Activated CD4-positive, alpha-beta memory T cell treated with anti-CD3 and anti-CD28 coated beads, Interleukin-2, amount 10 ng/mL, durations not matched to agents 7 days and 5 days (primary cell): ENCODE measurements at regions of chr20 and their contacts with region 1.

Region 1: GRCh38 chr20:50110141-50110925 is 2.6 kb downstream of the UBE2V1 start:
- DNase-seq: peak; percentile 74
- H3K4me3 Mint-ChIP-seq: peak overlapping the region; percentile 91
- H3K27ac Mint-ChIP-seq: peak overlapping the region; percentile 95
- H3K4me1 Mint-ChIP-seq: peaks cover 83% of the 10 kb centered on the region
- H3K27me3 Mint-ChIP-seq: no peaks in the 10 kb centered on the region

Region 2: GRCh38 chr20:50085452-50086365 is 24.6 kb before region 1 on chr20:
- CTCF ChIA-PET with region 1: interaction called, 12 read pairs
- POLR2A ChIA-PET with region 1: interaction called, 4 read pairs
- DNase-seq: peak; percentile 38
- H3K4me3 Mint-ChIP-seq: peak overlapping the region; percentile 41
- H3K27ac Mint-ChIP-seq: peak overlapping the region; percentile 67
- H3K4me1 Mint-ChIP-seq: peaks cover 17% of the 10 kb centered on the region
- H3K27me3 Mint-ChIP-seq: no peaks in the 10 kb centered on the region

Region 3: DNA sequence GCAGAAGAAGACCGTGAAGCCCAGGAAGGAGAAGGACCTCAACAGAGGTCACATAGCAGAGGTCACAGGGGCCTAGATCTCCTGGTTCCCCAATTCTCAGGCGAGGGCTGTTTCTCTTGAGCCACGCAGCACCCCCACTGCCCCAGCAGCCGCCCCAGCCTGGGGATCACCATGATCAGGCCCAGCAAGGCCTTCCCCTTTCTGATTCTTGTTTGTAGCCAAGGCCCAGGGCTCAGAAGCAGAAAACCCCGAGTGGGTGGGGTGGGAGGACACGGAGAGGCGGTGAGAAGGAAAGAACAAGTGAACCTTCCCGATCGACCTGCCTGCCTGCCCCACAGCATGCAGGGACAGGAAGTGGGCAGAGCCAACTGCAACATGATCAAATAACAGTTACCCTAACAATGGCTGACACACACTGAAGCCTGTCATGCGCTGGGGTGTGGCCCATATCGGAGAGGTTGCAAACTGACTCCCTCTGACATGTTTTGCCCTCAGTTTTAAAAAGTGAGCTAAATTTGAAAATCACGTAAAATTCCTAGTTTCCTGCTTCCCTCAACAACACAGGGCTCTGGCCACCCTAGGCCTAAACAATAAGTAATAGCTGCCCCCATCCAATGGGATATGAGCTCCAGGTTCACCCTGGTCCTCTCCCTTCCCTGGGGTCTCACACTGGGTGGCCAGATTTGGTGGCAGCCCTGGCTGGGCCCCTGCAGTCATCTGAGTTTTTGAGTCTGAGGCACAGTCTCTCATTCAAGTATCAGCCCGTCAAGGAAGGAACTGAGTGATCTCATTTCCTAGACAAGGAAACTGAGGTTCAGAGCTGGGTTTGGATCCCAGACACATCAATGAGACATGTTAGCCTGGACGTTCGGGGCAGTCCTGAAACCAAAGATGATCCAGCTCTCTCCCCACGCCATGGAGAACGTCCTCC is 36.7 kb after region 1 on chr20:
- CTCF ChIA-PET with region 1: interaction called, 35 read pairs
- POLR2A ChIA-PET with region 1: interaction called, 73 read pairs
- DNase-seq: peak; percentile 85
- H3K4me3 Mint-ChIP-seq: peak overlapping the region; percentile 76
- H3K27ac Mint-ChIP-seq: peak overlapping the region; percentile 96
- H3K4me1 Mint-ChIP-seq: peaks cover 76% of the 10 kb centered on the region
- H3K27me3 Mint-ChIP-seq: no peaks in the 10 kb centered on the region

Region 4: GRCh38 chr20:50320910-50321796 is 210.8 kb after region 1 on chr20:
- CTCF ChIA-PET with region 1: no interaction called
- POLR2A ChIA-PET with region 1: no interaction called
- DNase-seq: peak; percentile 28
- H3K4me3 Mint-ChIP-seq: no peak overlapping the region
- H3K27ac Mint-ChIP-seq: no peak overlapping the region
- H3K4me1 Mint-ChIP-seq: peaks cover 4% of the 10 kb centered on the region
- H3K27me3 Mint-ChIP-seq: peaks cover 29% of the 10 kb centered on the region